Ascending aorta (tissue), 2 donors: ENCODE measurements at regions of chr12 and their contacts with region 1.

Region 1: DNA sequence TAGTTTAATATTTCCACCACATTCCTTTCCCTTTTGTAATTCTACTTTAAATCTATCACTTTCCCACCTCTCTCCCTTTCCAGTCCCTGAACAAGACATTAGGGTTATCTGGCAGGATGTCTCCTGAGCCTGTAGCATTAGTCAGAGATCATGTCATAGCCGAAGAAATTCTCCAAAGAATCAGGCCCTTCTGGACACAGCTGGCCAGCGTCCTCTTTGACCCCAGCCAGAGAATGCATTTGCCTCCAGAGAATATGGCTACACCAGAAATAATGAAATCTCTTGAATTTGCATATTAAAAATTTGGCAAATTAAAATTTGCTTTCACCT is 56.7 kb downstream of the NTF3 start:
- DNase-seq: no peak
- H3K4me3 ChIP-seq: no peak overlapping the region
- H3K27ac ChIP-seq: peak overlapping the region; percentile 82 to 93
- H3K4me1 ChIP-seq: peaks cover 11 to 58% of the 10 kb centered on the region in 2 donors
- H3K27me3 ChIP-seq: no peaks in the 10 kb centered on the region
- CTCF ChIP-seq: no peak

Region 2: GRCh38 chr12:5456906-5457305 is 31.7 kb before region 1 on chr12:
- intact Hi-C with region 1: loop called (anchors 2 kb)
- DNase-seq: no peak
- H3K4me3 ChIP-seq: no peak overlapping the region
- H3K27ac ChIP-seq: peak overlapping the region; percentile 36 to 86
- H3K4me1 ChIP-seq: peaks cover 25 to 47% of the 10 kb centered on the region in 2 donors
- H3K27me3 ChIP-seq: no peaks in the 10 kb centered on the region
- CTCF ChIP-seq: no peak